ENCODE measurements at regions of chr3 and their contacts with region 1.

Region 1: GRCh38 chr3:70358978-70359580 is 46.6 kb upstream of the MDFIC2 start:
- DNase-seq: no peak

Region 2: DNA sequence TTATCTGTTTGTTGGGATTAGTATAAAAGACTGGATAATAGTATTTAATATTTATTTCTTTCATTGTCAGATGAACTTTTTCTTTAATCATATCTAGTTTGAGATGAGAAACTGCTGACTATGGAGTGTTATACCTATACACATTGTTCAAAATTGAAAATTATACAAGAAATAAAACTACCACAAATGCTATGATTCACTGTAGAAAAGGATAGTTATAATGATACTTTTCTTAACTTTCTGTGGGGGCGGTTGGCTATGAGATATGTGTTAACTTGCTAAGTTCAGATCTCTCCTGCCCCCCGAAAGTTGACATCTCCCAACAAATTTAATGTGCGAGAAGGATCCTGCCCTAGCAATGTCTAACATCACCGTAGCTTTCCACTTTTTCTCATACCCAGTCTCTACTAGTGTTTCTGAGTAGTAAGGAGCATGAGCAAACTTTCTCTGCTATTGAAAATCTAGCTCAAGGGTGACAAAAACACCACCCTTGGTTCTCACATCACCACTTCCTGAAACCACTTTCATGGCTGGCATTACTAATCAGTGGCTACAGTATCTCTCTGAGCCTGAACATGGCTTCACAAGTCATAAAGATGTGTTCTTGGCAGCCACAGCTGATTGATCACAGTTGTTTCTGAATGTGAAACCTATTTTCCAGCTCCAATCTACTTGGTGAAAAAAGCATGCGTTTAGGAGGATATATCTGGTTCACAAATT is 375.4 kb before region 1 on chr3:
- intact Hi-C with region 1: no loop called
- DNase-seq: no peak

Region 3: GRCh38 chr3:70064194-70064779 is 294.8 kb before region 1 on chr3:
- intact Hi-C with region 1: loop called (anchors 2 kb)
- DNase-seq: no peak

Region 4: DNA sequence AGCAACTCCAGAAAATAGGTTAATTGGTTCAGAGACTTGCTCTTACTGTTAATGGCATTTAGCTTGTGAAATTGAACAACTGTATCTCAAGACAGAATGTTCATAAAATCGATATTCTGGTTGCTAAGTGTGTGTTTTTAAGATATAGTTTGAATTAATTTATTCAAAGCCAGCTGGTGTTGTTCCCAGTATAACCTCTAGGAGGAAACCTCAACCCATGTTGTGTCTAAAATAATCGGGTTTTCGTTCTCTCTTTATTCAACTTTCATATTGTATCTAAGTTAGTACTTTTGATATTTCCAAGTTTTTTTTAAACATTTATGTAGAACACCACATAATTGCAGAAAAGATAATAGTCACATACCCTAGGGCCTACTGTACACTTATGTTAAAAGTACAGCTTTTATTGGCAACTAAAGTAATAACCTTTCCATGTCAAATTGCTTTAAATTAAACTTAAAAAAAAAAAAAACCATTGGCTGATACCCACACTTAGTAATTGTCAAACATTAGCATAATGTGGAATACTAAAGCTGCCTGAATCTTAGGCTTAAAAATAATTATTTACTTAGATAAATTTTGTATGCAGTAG is 268.7 kb before region 1 on chr3:
- intact Hi-C with region 1: loop called (anchors 10 kb)
- DNase-seq: no peak

Region 5: DNA sequence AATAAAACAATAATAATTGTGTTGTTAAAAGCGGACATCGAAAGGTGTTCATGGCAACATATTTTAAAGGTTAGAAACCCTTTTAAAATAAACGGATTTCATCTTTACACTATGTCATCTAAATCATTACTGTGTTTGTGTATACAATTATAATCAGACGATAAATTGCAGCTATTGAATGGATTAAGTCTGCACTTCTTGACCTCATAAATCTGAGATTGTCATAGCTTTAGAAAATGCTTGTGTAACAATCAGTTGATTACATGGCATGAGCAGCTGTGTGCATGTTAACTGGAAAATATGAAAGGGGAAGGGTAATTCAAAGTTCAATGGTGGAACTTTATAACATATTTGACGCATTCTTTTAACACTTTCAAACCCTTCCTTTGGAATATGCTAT is 105.8 kb after region 1 on chr3:
- intact Hi-C with region 1: no loop called
- DNase-seq: no peak